Pancreas (tissue), 10 donors: ENCODE measurements at regions of chr3 and their contacts with region 1.

Region 1: DNA sequence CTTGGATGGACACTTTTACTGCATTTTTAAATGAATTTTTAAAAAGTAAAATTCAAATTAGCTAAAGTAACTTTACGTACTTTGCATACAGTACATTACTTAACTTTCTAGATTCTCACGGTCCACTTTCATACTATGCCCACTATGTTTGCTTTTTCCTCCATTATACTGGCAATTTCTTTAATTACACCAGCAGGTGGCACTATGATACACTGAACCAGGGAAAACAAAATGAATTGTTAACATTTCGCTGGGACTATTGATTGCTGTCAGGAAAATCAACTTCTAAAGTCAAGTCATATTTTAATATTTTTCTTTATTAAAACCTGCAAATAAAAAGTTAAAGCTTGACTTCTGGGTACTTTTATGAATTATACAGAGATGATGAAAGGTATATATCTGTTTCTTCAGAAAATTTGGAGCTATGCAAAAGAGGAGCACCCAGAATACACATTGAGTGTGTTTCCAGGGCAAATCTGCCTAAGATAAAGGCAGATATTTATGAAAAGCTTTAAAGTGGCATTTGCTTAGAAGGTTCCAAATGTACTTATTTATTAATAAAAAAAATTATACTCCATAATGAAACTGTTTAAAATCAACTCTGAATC is 21.8 kb upstream of the POU1F1 start:
- DNase-seq: no peak
- ATAC-seq: peak; percentile 69 to 94 (median 91)
- H3K4me3 ChIP-seq: no peak overlapping the region
- H3K27ac ChIP-seq: no peak overlapping the region
- H3K4me1 ChIP-seq: peaks cover 0 to 4% (median 3%) of the 10 kb centered on the region in 3 donors
- H3K27me3 ChIP-seq: no peaks in the 10 kb centered on the region
- CTCF ChIP-seq: peak; percentile 25 to 55 (median 30)

Region 2: GRCh38 chr3:88003115-88003755 is 705.0 kb after region 1 on chr3:
- intact Hi-C with region 1: loop called in 1 of 3 experiments (anchors 10 kb)
- DNase-seq: no peak
- ATAC-seq: peak; percentile 66 to 85 (median 76)
- H3K4me3 ChIP-seq: no peak overlapping the region
- H3K27ac ChIP-seq: no peak overlapping the region
- H3K4me1 ChIP-seq: peaks cover 0 to 4% (median 3%) of the 10 kb centered on the region in 3 donors
- H3K27me3 ChIP-seq: no peaks in the 10 kb centered on the region
- CTCF ChIP-seq: peak; percentile 27 to 73 (median 56)